ENCODE measurements at regions of chr17 and their contacts with region 1.

Region 1: DNA sequence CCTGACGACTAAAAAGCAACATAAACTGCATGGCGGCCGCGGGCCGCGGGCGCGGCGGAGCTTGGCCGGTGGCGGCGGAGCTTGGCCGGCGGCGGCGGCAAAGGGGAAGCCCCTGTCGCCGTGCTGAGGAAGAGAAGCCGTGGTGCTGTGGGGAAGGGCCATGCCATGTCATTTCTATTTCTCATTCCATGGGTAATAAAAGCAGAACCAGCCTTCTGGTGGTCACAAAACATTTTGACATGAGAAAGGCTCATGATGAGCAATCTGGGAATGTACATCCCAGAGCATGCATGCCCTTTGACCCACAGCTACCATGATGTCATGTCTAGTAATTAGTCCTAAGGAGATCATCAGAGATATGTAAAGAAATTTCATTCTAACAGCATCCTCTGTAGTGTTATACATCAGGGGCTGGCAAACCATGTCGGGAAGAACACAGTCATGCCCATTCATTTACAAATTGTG is 23.9 kb upstream of the HEATR6 start:
- DNase-seq: peak; percentile 84

Region 2: DNA sequence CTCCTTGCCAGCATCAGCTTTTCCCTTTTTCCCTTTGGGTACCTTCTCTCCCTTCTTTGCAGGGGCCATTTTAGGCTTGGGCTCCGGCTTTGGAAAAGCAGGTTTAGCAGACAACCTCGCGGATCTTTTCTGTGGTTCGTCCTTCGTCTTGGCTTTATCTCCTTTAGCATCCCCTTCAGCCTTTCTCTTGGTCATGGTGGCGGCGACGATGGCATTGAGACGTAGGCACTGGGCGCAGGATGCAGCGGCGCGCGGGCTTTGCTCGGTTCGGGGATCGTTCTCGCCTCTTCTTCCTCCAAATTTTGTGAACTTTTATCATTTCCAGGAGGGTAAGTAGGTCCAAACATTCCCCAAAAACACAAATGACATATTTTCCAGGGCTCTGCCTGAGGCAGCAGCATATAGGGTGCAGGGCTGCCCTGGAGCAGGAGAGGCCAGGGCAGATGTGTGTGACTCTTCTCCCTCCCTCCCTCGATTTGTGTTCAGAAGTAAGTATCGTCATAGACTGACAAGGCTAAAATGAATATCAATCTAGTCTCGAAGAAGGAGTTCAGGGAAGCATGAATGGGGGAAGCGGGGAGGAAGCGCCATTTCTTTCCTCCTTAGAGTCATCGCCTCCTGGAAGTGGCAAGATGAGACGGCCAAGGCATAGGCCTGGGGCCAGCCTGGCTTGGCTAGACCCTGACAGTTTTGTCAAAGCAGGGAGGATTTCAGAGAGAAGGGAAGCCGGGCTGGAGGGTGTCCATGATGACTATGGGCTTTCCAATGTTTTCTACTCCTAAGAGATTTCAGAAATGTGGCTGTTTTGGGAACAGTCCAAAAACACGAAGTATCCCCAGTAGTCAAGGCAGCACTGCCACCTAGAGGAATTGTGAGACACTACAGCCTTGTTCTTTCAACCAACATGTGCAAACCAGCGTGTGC is 332.8 kb after region 1 on chr17:
- intact Hi-C with region 1: loop called in 1 of 2 experiments (anchors 10 kb)
- DNase-seq: peak; percentile 87

Measured in posterior vena cava (tissue), 2 donors.